T-cell (primary cell): ENCODE measurements at regions of chr1 and their contacts with region 1.

Region 1: DNA sequence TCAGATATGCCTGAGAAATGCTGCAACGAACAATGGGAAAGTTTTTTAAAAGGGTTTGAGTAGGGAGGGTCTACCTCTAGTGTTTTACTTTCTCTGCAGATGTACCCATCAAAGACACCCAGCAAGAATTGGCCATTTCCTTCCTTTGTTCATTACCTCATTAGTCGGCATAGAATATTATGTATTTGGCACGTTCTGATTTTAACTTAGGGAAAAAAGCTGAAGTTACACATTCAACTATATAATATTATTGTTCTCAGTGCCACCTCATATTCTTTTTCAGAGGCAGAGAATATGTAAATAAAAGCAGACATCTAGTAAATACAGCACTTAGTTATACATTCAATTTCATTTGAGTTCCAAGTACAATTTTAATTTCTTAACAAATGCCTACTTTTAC is 83.7 kb upstream of the PPP2R5A start:
- DNase-seq: no peak
- ATAC-seq: no peak
- H3K4me3 ChIP-seq: no peak overlapping the region
- H3K4me3 Mint-ChIP-seq: no peak overlapping the region
- H3K27ac ChIP-seq: no peak overlapping the region
- H3K27ac Mint-ChIP-seq: no peak overlapping the region
- H3K4me1 ChIP-seq: peaks cover 0 to 3% of the 10 kb centered on the region in 2 experiments
- H3K4me1 Mint-ChIP-seq: peaks cover 0 to 9% (median 7%) of the 10 kb centered on the region in 3 donors
- H3K27me3 ChIP-seq: no peaks in the 10 kb centered on the region
- H3K27me3 Mint-ChIP-seq: no peaks in the 10 kb centered on the region

Region 2: DNA sequence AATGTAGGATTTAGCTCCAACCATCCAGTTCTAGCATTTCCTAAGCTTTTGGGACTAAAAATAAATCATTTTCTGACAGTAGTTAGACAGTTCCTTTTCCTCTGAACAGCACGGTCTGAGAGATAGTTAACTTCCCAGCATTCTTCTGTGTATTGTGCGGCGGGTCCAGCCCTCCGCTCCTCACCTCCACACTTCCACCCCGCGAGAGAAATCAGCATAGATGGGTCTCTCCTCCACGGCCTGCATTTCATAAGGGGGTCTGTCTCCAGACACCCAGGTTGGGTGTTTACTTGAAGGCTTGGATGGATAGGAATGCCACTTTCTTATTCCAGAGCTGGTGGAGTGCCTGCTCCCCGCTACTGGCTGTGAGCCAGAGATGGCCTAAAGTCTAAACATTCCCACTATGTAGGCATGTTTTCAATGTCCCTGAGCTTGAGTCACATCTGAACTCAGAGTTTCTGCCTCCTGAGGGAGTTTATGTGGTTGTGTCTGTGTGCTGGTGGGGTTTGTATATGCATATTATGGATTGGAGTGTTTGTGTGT is 45.8 kb after region 1 on chr1:
- CTCF ChIA-PET with region 1: no interaction called
- POLR2A ChIA-PET with region 1: no interaction called
- DNase-seq: no peak
- ATAC-seq: no peak
- H3K4me3 ChIP-seq: no peak overlapping the region
- H3K4me3 Mint-ChIP-seq: no peak overlapping the region
- H3K27ac ChIP-seq: no peak overlapping the region
- H3K27ac Mint-ChIP-seq: no peak overlapping the region
- H3K4me1 ChIP-seq: peaks cover 4 to 8% of the 10 kb centered on the region in 2 experiments
- H3K4me1 Mint-ChIP-seq: peaks cover 19 to 32% (median 27%) of the 10 kb centered on the region in 3 donors
- H3K27me3 ChIP-seq: no peaks in the 10 kb centered on the region
- H3K27me3 Mint-ChIP-seq: peaks cover 0 to 8% of the 10 kb centered on the region in 2 donors

Region 3: DNA sequence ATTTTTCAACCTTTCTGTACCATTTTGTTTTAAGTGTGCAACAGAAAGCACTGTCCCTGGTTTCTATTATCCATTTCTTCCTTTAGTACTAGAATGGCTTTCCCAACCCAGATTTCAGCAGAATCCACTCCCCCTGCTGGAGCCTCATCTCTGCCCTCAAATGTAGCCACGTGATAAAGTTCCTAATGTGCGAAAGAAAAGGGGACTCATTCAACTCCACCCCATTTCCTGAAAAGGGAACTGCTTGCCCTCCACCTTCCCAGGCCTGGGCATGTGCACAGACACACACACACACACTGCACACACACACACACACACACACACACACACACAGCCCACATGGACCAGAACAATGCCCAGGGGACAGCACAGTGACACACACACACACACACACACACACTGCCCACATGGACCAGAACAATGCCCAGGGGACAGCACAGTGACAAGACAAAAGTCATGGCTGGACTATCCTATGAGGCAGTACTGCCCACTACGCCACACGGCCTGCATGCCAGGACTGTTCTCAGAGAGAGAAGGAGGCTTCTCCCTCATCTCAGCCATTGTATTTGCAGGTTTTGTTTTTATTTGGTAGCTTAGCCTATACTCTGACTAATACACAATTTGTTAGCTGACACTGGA is 180.1 kb after region 1 on chr1:
- CTCF ChIA-PET with region 1: interaction called in 1 of 2 experiments, 10 read pairs
- POLR2A ChIA-PET with region 1: no interaction called
- DNase-seq: no peak
- ATAC-seq: no peak
- H3K4me3 ChIP-seq: no peak overlapping the region
- H3K4me3 Mint-ChIP-seq: no peak overlapping the region
- H3K27ac ChIP-seq: no peak overlapping the region
- H3K27ac Mint-ChIP-seq: no peak overlapping the region
- H3K4me1 ChIP-seq: peaks cover 0 to 7% of the 10 kb centered on the region in 2 experiments
- H3K4me1 Mint-ChIP-seq: peaks cover 0 to 4% (median 2%) of the 10 kb centered on the region in 3 donors
- H3K27me3 ChIP-seq: no peaks in the 10 kb centered on the region
- H3K27me3 Mint-ChIP-seq: no peaks in the 10 kb centered on the region